ENCODE measurements at regions of chr19 and their contacts with region 1.

Region 1: GRCh38 chr19:18349524-18350128 is 9.2 kb downstream of the PGPEP1 start:
- ATAC-seq: peak in 3 of 8 experiments; percentile 75 to 90 (median 80)
- H3K4me3 ChIP-seq: no peak overlapping the region
- H3K27ac ChIP-seq: no peak overlapping the region
- H3K4me1 ChIP-seq: peaks cover 5 to 6% of the 10 kb centered on the region in 2 donors

Region 2: DNA sequence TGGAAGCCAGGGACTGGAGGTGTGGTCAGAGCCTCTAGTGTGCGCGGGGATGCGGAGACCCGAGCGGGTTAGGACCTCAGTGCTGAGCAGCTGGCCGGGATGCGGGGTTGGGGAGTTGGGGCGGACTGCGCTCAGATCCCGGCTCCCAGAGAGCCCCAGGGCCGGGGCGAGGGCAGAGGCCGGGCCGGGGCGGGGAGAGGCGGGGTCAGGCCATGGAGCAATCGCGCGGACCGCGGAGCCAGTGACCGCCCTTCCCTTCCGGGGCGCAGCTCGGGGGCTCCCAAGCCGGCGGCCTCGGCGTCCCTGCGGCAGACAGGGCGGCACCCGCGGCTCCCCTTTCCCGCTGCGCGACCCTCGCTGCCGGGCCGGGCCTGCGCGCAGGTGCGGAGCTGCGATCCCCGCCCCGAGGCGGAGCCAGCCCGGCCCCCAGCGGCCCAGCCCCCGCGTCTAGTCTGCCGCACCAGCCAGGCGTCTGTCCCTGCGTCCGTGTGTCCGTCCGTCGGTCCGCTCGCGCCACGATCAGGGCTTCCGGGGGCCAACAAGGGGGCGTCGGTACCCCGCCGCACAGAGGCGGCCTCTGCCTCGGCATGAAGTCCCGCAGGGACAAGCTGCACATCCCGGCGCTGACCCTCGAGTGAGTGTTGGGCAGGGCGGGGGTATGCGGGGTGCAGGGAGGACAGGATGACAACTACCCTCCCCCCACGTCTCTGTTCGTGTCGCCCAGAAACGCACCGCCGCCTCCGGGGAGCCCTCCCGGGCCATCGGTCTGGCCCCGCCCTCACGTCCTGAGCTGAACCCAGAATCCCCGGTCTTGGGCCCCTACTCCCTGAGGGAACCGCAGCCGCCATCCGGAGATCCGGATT is 239.7 kb before region 1 on chr19:
- in situ Hi-C with region 1: no loop called
- ATAC-seq: peak; percentile 56 to 85 (median 66)
- H3K4me3 ChIP-seq: peak overlapping the region; percentile 37 to 52 (median 44)
- H3K27ac ChIP-seq: peak overlapping the region in 1 of 2 donors; percentile 55
- H3K4me1 ChIP-seq: peaks cover 0 to 19% of the 10 kb centered on the region in 2 donors

Region 3: GRCh38 chr19:18401580-18402112 is 52.0 kb after region 1 on chr19:
- in situ Hi-C with region 1: loop called in 2 of 9 experiments (anchors 10 kb)
- ATAC-seq: peak in 7 of 8 experiments; percentile 20 to 91 (median 43)
- H3K4me3 ChIP-seq: no peak overlapping the region
- H3K27ac ChIP-seq: no peak overlapping the region
- H3K4me1 ChIP-seq: peaks cover 14 to 33% of the 10 kb centered on the region in 2 donors

Region 4: GRCh38 chr19:18588611-18589379 is 239.2 kb after region 1 on chr19 and contains the start of gene REX1BD:
- in situ Hi-C with region 1: no loop called
- ATAC-seq: peak; percentile 57 to 87 (median 66)
- H3K4me3 ChIP-seq: peak within 1 kb of the TSS; percentile 78 to 96 (median 90)
- H3K27ac ChIP-seq: peak within 1 kb of the TSS; percentile 87 to 88
- H3K4me1 ChIP-seq: peaks cover 3% of the 10 kb centered on the region in 2 donors
- total RNA-seq, gene REX1BD: 39.5 to 76.6 (median 53.9) TPM

Measured in motor neuron (in vitro differentiated cells).